HEK293 (cell line): ENCODE measurements at regions of chr10 and their contacts with region 1.

Region 1: GRCh38 chr10:101467286-101467770 is 113.4 kb downstream of the BTRC start:
- H3K4me3 ChIP-seq: no peak overlapping the region
- H3K27ac ChIP-seq: no peak overlapping the region
- H3K4me1 ChIP-seq: peaks cover 15% of the 10 kb centered on the region
- CTCF ChIP-seq: 0 out of 2 replicates have a peak, but pooled peaks have one; percentile 21

Region 2: GRCh38 chr10:101257084-101257483 is 210.2 kb before region 1 on chr10:
- CTCF ChIA-PET with region 1: no interaction called
- POLR2A ChIA-PET with region 1: no interaction called
- H3K4me3 ChIP-seq: no peak overlapping the region
- H3K27ac ChIP-seq: no peak overlapping the region
- H3K4me1 ChIP-seq: no peaks in the 10 kb centered on the region
- CTCF ChIP-seq: no peak

Region 3: GRCh38 chr10:101297901-101298486 is 169.3 kb before region 1 on chr10:
- CTCF ChIA-PET with region 1: interaction called, 28 read pairs
- POLR2A ChIA-PET with region 1: no interaction called
- H3K4me3 ChIP-seq: no peak overlapping the region
- H3K27ac ChIP-seq: no peak overlapping the region
- H3K4me1 ChIP-seq: no peaks in the 10 kb centered on the region
- CTCF ChIP-seq: peak; percentile 89

Region 4: GRCh38 chr10:101429423-101429822 is 37.9 kb before region 1 on chr10:
- CTCF ChIA-PET with region 1: no interaction called
- POLR2A ChIA-PET with region 1: no interaction called
- H3K4me3 ChIP-seq: no peak overlapping the region
- H3K27ac ChIP-seq: no peak overlapping the region
- H3K4me1 ChIP-seq: no peaks in the 10 kb centered on the region
- CTCF ChIP-seq: no peak

Region 5: GRCh38 chr10:101441541-101442455 is 25.5 kb before region 1 on chr10:
- CTCF ChIA-PET with region 1: interaction called, 46 read pairs
- POLR2A ChIA-PET with region 1: no interaction called
- H3K4me3 ChIP-seq: no peak overlapping the region
- H3K27ac ChIP-seq: no peak overlapping the region
- H3K4me1 ChIP-seq: peaks cover 26% of the 10 kb centered on the region
- CTCF ChIP-seq: peak; percentile 94

Region 6: DNA sequence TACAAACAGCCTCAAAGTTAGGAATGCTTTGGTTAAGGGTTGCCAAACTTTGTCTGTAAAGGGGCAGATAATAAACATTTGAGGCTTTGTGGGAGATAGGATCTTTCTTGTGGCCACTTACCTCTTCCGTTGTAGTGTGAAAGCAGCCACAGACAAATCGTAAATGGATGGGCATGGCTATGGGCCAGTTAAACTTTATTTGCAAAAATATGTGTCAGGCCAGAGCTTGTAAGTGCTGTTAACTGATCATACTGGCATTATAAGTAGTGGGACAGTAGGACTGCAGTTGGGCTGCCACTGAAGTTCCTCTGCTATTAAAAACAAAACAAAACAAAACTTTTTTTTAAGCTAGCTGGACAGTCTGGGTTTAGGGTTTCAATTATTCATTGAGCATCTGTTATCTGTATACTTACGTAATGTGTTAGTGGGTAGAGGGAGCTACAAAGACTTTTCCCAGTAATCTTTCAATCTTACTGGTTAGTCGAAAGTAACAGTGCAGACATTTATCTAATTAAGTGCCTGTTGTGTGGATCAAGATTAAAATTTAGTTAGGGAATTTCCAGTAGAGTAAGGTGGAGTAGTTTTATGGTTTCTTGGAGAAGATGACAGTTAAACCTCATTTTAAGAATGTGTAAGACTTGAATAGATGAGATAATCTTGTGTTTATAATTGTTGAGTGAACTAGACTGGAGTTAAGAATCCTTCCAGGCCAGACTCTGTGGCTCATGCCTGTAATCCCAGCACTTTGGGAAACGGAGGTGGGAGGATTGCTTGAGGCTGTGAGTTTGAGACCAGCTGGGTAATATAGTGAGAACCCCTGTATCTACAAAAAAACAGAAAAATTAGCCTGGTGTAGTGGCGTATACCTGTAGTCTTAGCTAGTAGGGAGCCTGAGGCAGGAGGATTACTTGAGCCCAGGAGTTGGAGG is 13.3 kb before region 1 on chr10:
- CTCF ChIA-PET with region 1: interaction called, 44 read pairs
- POLR2A ChIA-PET with region 1: interaction called, 4 read pairs
- H3K4me3 ChIP-seq: no peak overlapping the region
- H3K27ac ChIP-seq: peak overlapping the region; percentile 67
- H3K4me1 ChIP-seq: peaks cover 55% of the 10 kb centered on the region
- CTCF ChIP-seq: no peak

Region 7: GRCh38 chr10:101478956-101479355 is 11.6 kb after region 1 on chr10:
- CTCF ChIA-PET with region 1: interaction called, 22 read pairs
- POLR2A ChIA-PET with region 1: no interaction called
- H3K4me3 ChIP-seq: no peak overlapping the region
- H3K27ac ChIP-seq: no peak overlapping the region
- H3K4me1 ChIP-seq: no peaks in the 10 kb centered on the region
- CTCF ChIP-seq: no peak

Region 8: GRCh38 chr10:101489355-101489754 is 22.0 kb after region 1 on chr10:
- CTCF ChIA-PET with region 1: interaction called, 28 read pairs
- POLR2A ChIA-PET with region 1: interaction called, 3 read pairs
- H3K4me3 ChIP-seq: no peak overlapping the region
- H3K27ac ChIP-seq: no peak overlapping the region
- H3K4me1 ChIP-seq: peaks cover 26% of the 10 kb centered on the region
- CTCF ChIP-seq: no peak

Region 9: GRCh38 chr10:101506829-101507661 is 39.7 kb after region 1 on chr10:
- CTCF ChIA-PET with region 1: interaction called, 10 read pairs
- POLR2A ChIA-PET with region 1: no interaction called
- H3K4me3 ChIP-seq: no peak overlapping the region
- H3K27ac ChIP-seq: no peak overlapping the region; the same call in 1 of the 2 replicates
- H3K4me1 ChIP-seq: peaks cover 19% of the 10 kb centered on the region
- CTCF ChIP-seq: no peak

Region 10: GRCh38 chr10:101617102-101617823 is 149.9 kb after region 1 on chr10:
- CTCF ChIA-PET with region 1: no interaction called
- POLR2A ChIA-PET with region 1: no interaction called
- H3K4me3 ChIP-seq: no peak overlapping the region
- H3K27ac ChIP-seq: no peak overlapping the region
- H3K4me1 ChIP-seq: no peaks in the 10 kb centered on the region
- CTCF ChIP-seq: peak; percentile 24; the same call in 1 of the 2 replicates